ENCODE measurements at regions of chr1 and their contacts with region 1.

Region 1: DNA sequence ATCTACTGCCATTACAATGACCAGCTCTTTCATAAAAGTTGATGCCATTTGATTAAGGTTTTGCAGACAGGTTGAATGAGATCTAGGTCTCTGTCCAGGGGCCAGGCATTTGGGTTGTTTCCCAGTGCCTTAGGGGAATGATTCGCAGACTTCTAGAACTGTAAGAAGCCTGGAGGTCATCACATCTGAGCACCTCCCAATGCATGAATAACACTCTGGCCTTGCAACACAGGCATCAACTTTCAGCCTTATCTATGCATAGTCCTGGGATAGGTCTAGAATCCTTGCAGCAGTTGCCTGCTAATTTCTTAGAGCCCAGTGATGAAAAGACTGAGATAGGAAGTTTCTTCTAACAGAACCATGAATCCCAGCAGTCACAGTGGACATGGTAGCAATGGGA is 44.8 kb upstream of the KCND3 start:
- DNase-seq: no peak
- H3K4me3 ChIP-seq: no peak overlapping the region
- H3K27ac ChIP-seq: no peak overlapping the region
- H3K27me3 ChIP-seq: no peaks in the 10 kb centered on the region
- CTCF ChIP-seq: no peak

Region 2: GRCh38 chr1:111672331-111672730 is 361.9 kb before region 1 on chr1:
- CTCF ChIA-PET with region 1: no interaction called
- POLR2A ChIA-PET with region 1: no interaction called
- DNase-seq: peak; percentile 4
- H3K4me3 ChIP-seq: no peak overlapping the region
- H3K27ac ChIP-seq: no peak overlapping the region
- H3K27me3 ChIP-seq: no peaks in the 10 kb centered on the region
- CTCF ChIP-seq: no peak

Region 3: GRCh38 chr1:112001436-112001835 is 32.8 kb before region 1 on chr1:
- CTCF ChIA-PET with region 1: interaction called, 10 read pairs
- POLR2A ChIA-PET with region 1: no interaction called
- DNase-seq: no peak
- H3K4me3 ChIP-seq: no peak overlapping the region
- H3K27ac ChIP-seq: no peak overlapping the region
- H3K27me3 ChIP-seq: peaks cover 3% of the 10 kb centered on the region
- CTCF ChIP-seq: no peak